ENCODE measurements at regions of chr16 and their contacts with region 1.

Region 1: GRCh38 chr16:75622761-75623605 is at the start of gene ADAT1:
- DNase-seq: peak; percentile 99
- ATAC-seq: peak; percentile 94
- H3K4me3 Mint-ChIP-seq: peak within 1 kb of the TSS; percentile 93
- H3K27ac Mint-ChIP-seq: peak within 1 kb of the TSS; percentile 95
- H3K4me1 Mint-ChIP-seq: peaks cover 45% of the 10 kb centered on the region
- H3K27me3 Mint-ChIP-seq: no peaks in the 10 kb centered on the region
- total RNA-seq, gene ADAT1: 48.3 to 55.7 TPM

Region 2: GRCh38 chr16:74606521-74607310 is 1016.3 kb before region 1 on chr16 and contains the start of gene GLG1:
- CTCF ChIA-PET with region 1: no interaction called
- POLR2A ChIA-PET with region 1: no interaction called
- intact Hi-C with region 1: loop called in 1 of 2 experiments (anchors 1 kb)
- DNase-seq: peak; percentile 95
- ATAC-seq: peak; percentile 87
- H3K4me3 Mint-ChIP-seq: peak within 1 kb of the TSS; percentile 87
- H3K27ac Mint-ChIP-seq: peak within 1 kb of the TSS; percentile 93
- H3K4me1 Mint-ChIP-seq: peaks cover 57% of the 10 kb centered on the region
- H3K27me3 Mint-ChIP-seq: no peaks in the 10 kb centered on the region
- total RNA-seq, gene GLG1: 66.3 to 68.3 TPM

Region 3: DNA sequence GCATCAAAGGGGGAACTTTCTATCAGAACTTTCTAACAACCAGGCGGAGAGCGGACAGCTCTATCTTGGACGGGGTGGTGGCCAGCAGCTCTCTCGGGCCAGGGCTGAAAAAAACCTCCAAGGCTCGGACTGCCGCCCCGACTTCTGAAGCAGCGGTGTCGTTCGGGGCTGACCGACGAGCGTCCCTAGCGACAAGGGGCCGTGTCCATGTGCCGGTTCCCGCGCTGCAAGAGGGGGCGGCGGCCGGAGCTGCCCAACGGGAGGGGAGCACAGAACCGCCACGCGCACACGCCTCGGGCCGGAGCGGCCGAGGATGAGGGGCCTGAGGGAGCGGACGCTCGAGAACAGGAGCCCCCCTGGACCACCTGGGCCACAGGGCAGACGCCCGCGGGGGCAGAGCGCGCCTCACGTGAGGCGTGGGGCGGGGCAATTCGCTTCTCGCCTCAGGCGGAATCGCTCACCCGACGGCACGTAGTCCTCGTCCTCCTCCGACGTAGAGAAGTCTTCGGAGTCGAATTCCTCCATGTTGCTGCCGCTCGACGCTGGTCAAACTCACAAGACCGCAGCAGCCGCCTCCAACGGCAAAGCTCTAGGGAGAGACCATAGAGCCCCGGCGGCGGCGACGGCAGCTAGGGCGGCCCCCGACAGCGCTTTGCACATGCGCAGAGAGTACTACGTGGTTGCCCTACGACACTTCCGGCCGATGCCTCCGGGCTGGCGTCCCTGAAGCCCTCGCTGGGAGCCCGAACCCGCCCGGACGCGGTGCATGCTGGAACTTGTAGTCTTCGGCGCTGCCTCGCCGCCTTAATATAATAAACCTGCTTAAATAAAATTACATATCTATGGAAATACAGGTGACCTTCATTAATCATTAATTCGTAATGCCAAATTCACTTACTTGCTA is 189.9 kb before region 1 on chr16 and contains the start of gene CFDP1:
- CTCF ChIA-PET with region 1: interaction called, 8 read pairs
- POLR2A ChIA-PET with region 1: no interaction called
- intact Hi-C with region 1: loop called (anchors 1 kb)
- DNase-seq: peak; percentile 97
- ATAC-seq: peak; percentile 94
- H3K4me3 Mint-ChIP-seq: peak within 1 kb of the TSS; percentile 92
- H3K27ac Mint-ChIP-seq: peak within 1 kb of the TSS; percentile 95
- H3K4me1 Mint-ChIP-seq: peaks cover 39% of the 10 kb centered on the region
- H3K27me3 Mint-ChIP-seq: no peaks in the 10 kb centered on the region
- total RNA-seq, gene CFDP1: 44.0 to 48.2 TPM

Region 4: DNA sequence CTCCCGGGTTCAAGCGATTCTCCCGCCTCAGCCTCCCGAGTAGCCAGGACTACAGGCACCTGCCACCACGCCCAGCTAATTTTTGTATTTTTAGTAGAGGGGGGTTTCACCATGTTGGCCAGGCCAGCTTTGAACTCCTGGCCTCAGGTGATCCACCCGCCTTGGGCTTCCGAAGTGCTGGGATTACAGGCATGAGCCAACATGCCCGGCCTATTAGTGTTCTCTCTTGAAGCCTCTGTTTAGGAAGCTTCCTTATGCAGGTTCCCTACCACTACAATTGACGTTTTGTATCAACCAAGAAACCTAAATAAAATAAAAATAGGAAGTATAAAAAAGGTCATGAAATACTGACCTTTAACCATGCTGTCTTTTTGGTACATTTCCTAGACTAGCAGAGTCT is 103.1 kb before region 1 on chr16:
- CTCF ChIA-PET with region 1: interaction called, 7 read pairs
- POLR2A ChIA-PET with region 1: no interaction called
- intact Hi-C with region 1: loop called (anchors 1 kb)
- DNase-seq: no peak
- ATAC-seq: no peak
- H3K4me3 Mint-ChIP-seq: no peak overlapping the region
- H3K27ac Mint-ChIP-seq: no peak overlapping the region
- H3K4me1 Mint-ChIP-seq: peaks cover 7% of the 10 kb centered on the region
- H3K27me3 Mint-ChIP-seq: no peaks in the 10 kb centered on the region

Region 5: GRCh38 chr16:75566040-75566810 is 56.8 kb before region 1 on chr16 and contains the start of gene GABARAPL2:
- CTCF ChIA-PET with region 1: interaction called, 5 read pairs
- POLR2A ChIA-PET with region 1: interaction called, 5 read pairs
- intact Hi-C with region 1: loop called (anchors 1 to 2 kb)
- DNase-seq: peak; percentile 94
- ATAC-seq: peak; percentile 72
- H3K4me3 Mint-ChIP-seq: peak within 1 kb of the TSS; percentile 82
- H3K27ac Mint-ChIP-seq: peak within 1 kb of the TSS; percentile 86
- H3K4me1 Mint-ChIP-seq: peaks cover 44% of the 10 kb centered on the region
- H3K27me3 Mint-ChIP-seq: peaks cover 10% of the 10 kb centered on the region
- total RNA-seq, gene GABARAPL2: 31.9 to 58.0 TPM

Measured in activated CD4-positive, alpha-beta T cell treated with anti-CD3 and anti-CD28 coated beads for 36 hours (primary cell).